Sigmoid colon (tissue), 7 donors: ENCODE measurements at regions of chr7 and their contacts with region 1.

Region 1: DNA sequence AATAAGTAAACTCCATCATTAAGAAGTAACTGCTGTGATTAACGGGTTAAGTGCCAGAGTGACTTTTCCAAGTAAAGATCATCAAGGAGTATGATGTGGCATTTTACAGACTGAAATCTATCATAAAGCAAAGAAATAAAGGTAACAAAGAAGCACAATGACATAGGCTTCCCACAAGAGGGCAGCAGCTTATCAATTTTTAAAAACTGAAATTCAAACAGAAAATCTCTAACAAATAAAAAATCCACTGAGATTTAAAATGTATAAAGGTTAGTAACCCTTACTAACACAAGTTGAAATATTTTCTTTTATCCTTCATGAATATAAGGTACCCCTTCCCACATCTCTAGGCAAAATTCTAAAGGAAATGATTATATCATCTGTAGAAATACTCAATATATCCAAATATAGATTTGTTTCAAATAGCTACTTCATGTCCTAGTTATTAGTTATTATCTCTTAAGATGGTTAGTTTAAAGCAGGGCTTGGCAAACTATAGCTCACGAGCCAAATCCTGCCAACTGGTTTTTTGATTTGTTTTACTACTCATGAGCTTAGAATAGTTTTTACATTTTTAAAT is 29.2 kb downstream of the FAM3C start:
- DNase-seq: no peak
- H3K4me3 ChIP-seq: no peak overlapping the region
- H3K27ac ChIP-seq: no peak overlapping the region
- H3K4me1 ChIP-seq: peaks cover 0 to 28% (median 12%) of the 10 kb centered on the region in 4 donors
- H3K27me3 ChIP-seq: no peaks in the 10 kb centered on the region
- CTCF ChIP-seq: peak; percentile 62 to 77 (median 74)
- EP300 ChIP-seq: no peak
- POLR2A ChIP-seq: no peak

Region 2: GRCh38 chr7:121547544-121548092 is 180.7 kb after region 1 on chr7:
- intact Hi-C with region 1: loop called (anchors 1 kb)
- DNase-seq: no peak
- H3K4me3 ChIP-seq: no peak overlapping the region
- H3K27ac ChIP-seq: no peak overlapping the region
- H3K4me1 ChIP-seq: peaks cover 0 to 13% (median 2%) of the 10 kb centered on the region in 4 donors
- H3K27me3 ChIP-seq: no peaks in the 10 kb centered on the region
- CTCF ChIP-seq: peak; percentile 59 to 78 (median 74)
- EP300 ChIP-seq: no peak
- POLR2A ChIP-seq: no peak

Region 3: GRCh38 chr7:121994625-121995410 is 627.9 kb after region 1 on chr7:
- intact Hi-C with region 1: loop called (anchors 5 kb)
- DNase-seq: no peak
- H3K4me3 ChIP-seq: no peak overlapping the region
- H3K27ac ChIP-seq: no peak overlapping the region
- H3K4me1 ChIP-seq: no peaks in the 10 kb centered on the region
- H3K27me3 ChIP-seq: no peaks in the 10 kb centered on the region
- CTCF ChIP-seq: peak; percentile 6 to 51 (median 23)
- EP300 ChIP-seq: no peak
- POLR2A ChIP-seq: no peak

Region 4: GRCh38 chr7:122006687-122007086 is 639.7 kb after region 1 on chr7:
- intact Hi-C with region 1: no loop called
- DNase-seq: no peak
- H3K4me3 ChIP-seq: no peak overlapping the region
- H3K27ac ChIP-seq: no peak overlapping the region
- H3K4me1 ChIP-seq: no peaks in the 10 kb centered on the region
- H3K27me3 ChIP-seq: no peaks in the 10 kb centered on the region
- CTCF ChIP-seq: no peak
- EP300 ChIP-seq: no peak
- POLR2A ChIP-seq: no peak